ENCODE measurements at regions of chr4 and their contacts with region 1.

Region 1: DNA sequence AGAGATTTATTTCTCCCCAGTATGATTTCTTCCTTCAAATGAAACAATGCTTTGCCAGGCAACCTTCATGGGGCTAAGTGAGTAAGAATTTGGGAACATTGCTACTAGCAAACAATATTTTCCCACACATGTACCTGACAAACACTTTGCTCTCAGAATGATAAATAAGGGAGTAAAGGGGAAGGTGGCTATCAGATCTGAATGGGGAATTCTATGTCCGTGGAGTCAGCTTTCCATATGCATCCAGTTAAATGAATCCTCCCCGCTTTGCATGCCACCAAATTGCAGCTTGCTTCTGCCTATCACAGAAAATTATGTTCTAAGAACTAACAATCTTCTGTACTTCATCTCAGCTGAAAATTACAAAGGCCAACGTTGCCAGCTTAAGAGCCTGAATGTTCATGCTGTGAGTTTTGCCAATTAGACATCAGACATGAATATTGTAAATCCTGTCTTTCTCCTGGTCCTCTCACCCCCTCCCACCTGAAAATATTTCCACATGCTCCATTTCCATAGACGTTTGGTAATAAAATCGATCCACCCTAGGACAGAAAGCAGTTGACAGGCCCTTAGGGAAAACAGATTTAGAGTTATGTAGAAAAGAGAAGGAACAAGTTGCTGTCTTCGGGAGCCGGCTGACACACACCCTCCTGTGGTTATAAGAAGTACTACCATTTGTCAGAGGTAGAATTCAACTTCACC is 6.3 kb downstream of the MEPE start:
- DNase-seq: no peak
- H3K4me3 ChIP-seq: no peak overlapping the region
- H3K27ac ChIP-seq: no peak overlapping the region
- H3K4me1 ChIP-seq: peaks cover 0 to 9% of the 10 kb centered on the region in 2 experiments; a peak in 1 of 4 replicates
- H3K27me3 ChIP-seq: no peaks in the 10 kb centered on the region
- CTCF ChIP-seq: peak; percentile 75
- EP300 ChIP-seq: no peak
- RAD21 ChIP-seq: peak; percentile 76

Region 2: DNA sequence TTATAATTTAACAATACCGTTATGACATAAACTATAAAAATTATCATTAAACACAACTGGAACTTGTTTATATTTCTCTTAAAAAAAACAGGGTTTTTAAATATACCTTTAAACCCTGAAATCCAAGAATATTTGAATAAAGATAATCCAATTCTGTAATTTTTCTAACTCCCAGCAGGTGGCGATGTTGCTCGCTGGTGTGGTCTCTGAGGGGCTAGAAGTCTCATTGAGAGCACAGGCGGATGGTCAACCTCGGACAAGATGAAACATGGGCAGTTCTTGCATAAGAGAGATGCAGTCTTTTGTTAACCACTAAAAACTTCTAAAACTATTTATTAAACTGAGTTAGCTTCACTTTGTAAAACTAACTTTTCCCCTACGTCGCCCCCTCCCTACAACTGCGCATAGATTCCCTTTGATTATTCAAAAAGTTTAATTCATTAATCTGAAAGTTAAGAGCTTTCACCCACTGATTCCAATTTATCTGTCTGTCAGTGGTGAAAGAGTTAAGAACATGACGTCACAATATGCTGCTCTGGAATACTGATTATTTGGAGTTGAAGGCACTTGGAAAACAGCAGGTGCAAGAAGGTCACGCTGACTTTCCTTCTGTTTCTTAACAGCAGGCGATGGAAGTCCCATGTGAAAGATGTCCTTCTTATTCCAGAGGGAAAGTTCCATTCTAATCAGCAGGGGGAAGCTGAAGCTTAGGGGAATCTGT is 159.4 kb before region 1 on chr4:
- CTCF ChIA-PET with region 1: interaction called, 26 read pairs
- POLR2A ChIA-PET with region 1: no interaction called
- DNase-seq: peak; percentile 59
- H3K4me3 ChIP-seq: no peak overlapping the region
- H3K27ac ChIP-seq: no peak overlapping the region
- H3K4me1 ChIP-seq: no peaks in the 10 kb centered on the region
- H3K27me3 ChIP-seq: no peaks in the 10 kb centered on the region
- CTCF ChIP-seq: peak; percentile 90
- EP300 ChIP-seq: no peak
- RAD21 ChIP-seq: peak; percentile 91

Region 3: DNA sequence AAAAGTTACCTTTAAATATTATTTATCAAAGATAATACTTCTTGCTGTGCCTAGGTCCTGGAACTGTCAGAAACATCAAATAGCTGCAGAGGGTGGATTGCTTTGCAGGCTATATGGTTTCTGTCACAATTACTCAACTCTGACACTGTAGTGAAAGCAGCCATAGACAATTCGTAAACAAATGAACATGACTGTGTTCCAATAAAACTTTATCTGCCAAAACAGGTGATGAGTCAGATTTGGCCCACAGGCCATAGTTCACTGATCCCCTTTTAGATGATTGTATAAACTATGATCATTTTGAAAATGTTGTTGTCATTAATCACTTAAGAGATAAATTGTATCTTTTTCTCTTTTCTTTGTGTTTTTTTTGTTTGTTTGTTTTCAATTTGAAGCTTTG is 14.7 kb before region 1 on chr4:
- CTCF ChIA-PET with region 1: interaction called, 14 read pairs
- POLR2A ChIA-PET with region 1: no interaction called
- DNase-seq: no peak
- H3K4me3 ChIP-seq: no peak overlapping the region
- H3K27ac ChIP-seq: no peak overlapping the region
- H3K4me1 ChIP-seq: no peaks in the 10 kb centered on the region; a peak in 1 of 4 replicates
- H3K27me3 ChIP-seq: no peaks in the 10 kb centered on the region
- CTCF ChIP-seq: no peak
- EP300 ChIP-seq: no peak
- RAD21 ChIP-seq: no peak

Region 4: DNA sequence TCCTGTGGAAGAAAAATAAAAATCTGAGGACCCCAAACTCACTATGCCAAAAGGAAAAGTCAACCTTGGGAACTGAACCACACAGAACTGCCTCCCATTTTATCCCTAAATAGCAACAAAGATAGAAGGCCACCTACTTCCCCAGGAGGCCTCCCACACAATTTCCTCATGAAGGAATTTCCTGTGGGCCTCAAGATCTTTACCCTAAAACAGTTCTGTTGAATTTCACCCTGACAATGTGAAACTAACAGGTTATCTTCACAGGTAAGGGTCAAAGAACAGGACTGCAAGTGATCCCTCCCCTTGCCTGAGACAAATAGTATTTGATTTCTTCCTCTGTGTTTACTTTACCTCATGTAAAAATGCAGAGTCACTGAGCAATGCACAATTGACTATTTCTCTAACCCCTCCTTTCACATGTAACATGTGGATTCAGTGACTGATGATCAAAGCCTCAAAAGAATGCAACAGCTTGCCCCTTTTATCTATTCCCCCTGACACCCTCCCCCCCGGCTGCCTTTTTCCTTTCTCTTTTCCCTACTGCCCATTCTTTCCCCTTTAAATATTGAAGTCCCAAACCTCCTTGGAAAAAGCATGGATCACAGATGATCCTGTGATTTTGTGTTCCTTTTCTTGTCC is 27.0 kb after region 1 on chr4:
- CTCF ChIA-PET with region 1: no interaction called
- POLR2A ChIA-PET with region 1: no interaction called
- DNase-seq: no peak
- H3K4me3 ChIP-seq: no peak overlapping the region
- H3K27ac ChIP-seq: no peak overlapping the region
- H3K4me1 ChIP-seq: no peaks in the 10 kb centered on the region
- H3K27me3 ChIP-seq: no peaks in the 10 kb centered on the region
- CTCF ChIP-seq: no peak
- EP300 ChIP-seq: no peak
- RAD21 ChIP-seq: no peak

Measured in SK-N-SH (cell line).